ENCODE measurements at regions of chr15 and their contacts with region 1.

Region 1: GRCh38 chr15:32888221-32888761 is 170.5 kb downstream of the GREM1 start:
- DNase-seq: no peak
- ATAC-seq: no peak
- H3K4me3 ChIP-seq: no peak overlapping the region
- H3K27ac ChIP-seq: no peak overlapping the region
- H3K4me1 ChIP-seq: no peaks in the 10 kb centered on the region
- H3K27me3 ChIP-seq: no peaks in the 10 kb centered on the region
- CTCF ChIP-seq: no peak
- EP300 ChIP-seq: no peak
- POLR2A ChIP-seq: no peak
- RAD21 ChIP-seq: no peak

Region 2: GRCh38 chr15:32870240-32871033 is 17.9 kb before region 1 on chr15:
- CTCF ChIA-PET with region 1: interaction called, 12 read pairs
- POLR2A ChIA-PET with region 1: no interaction called
- RAD21 ChIA-PET with region 1: no interaction called
- SMC1A ChIA-PET with region 1: interaction called, 3 read pairs
- in situ Hi-C with region 1: no loop called
- intact Hi-C with region 1: no loop called
- DNase-seq: peak; percentile 60
- ATAC-seq: peak; percentile 94
- H3K4me3 ChIP-seq: no peak overlapping the region
- H3K27ac ChIP-seq: no peak overlapping the region
- H3K4me1 ChIP-seq: peaks cover 3% of the 10 kb centered on the region; the same call in 1 of the 2 replicates
- H3K27me3 ChIP-seq: no peaks in the 10 kb centered on the region
- CTCF ChIP-seq: no peak
- EP300 ChIP-seq: peak; percentile 89 to 92
- POLR2A ChIP-seq: no peak
- RAD21 ChIP-seq: no peak

Measured in GM12878 (cell line).